Activated T-helper 1 cell treated with anti-CD3 and anti-CD28 coated beads, Interleukin-12 subunit alpha, Interleukin-12 subunit beta, Interleukin-2, Interleukin-4 antibody, amounts not matched to agents 30 ng/mL and 10 ng/mL and 1 ng/mL, durations not matched to agents 14 hours and 24 hours and 36 hours (primary cell): ENCODE measurements at regions of chr15 and their contacts with region 1.

Region 1: GRCh38 chr15:99928429-99928981 is 195.3 kb upstream of the LYSMD4 start:
- DNase-seq: peak; percentile 87
- H3K4me3 Mint-ChIP-seq: peak overlapping the region; percentile 82
- H3K27ac Mint-ChIP-seq: peak overlapping the region; percentile 87
- H3K4me1 Mint-ChIP-seq: peaks cover 14% of the 10 kb centered on the region
- H3K27me3 Mint-ChIP-seq: peaks cover 23% of the 10 kb centered on the region

Region 2: DNA sequence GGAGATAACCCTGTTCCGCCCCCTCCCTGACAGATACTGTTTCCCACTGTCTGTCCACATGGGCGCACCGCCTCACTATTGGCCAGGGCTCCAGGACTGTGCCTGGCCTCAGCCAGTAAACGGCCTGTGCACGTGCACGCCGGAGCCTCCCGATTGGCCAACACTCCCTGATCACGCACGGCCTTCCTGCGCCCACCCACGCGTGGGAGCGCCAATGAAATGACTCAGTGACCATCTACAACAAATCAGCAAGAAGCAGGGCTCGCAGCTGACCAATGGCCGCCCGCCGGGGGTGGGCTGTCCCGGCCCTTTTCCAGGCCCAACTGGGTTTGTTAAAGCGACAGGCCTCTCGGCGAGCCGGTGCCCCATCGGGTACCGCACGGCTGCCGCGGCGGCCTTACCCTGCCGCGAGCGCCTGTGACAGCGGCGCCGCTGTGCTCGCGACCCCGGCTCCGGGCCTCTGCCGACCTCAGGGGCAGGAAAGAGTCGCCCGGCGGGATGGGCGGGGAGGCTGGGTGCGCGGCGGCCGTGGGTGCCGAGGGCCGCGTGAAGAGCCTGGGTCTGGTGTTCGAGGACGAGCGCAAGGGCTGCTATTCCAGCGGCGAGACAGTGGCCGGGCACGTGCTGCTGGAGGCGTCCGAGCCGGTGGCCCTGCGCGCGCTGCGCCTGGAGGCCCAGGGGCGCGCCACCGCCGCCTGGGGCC is 1968.0 kb before region 1 on chr15 and contains the start of gene ARRDC4:
- intact Hi-C with region 1: loop called (anchors 2 kb)
- DNase-seq: peak; percentile 97
- H3K4me3 Mint-ChIP-seq: peak within 1 kb of the TSS; percentile 82
- H3K27ac Mint-ChIP-seq: peak within 1 kb of the TSS; percentile 75
- H3K4me1 Mint-ChIP-seq: peaks cover 35% of the 10 kb centered on the region
- H3K27me3 Mint-ChIP-seq: peaks cover 16% of the 10 kb centered on the region
- total RNA-seq, gene ARRDC4: 1.3 and 1.5 TPM in 2 replicates

Region 3: GRCh38 chr15:99733268-99734039 is 195.1 kb before region 1 on chr15 and contains the start of gene LYSMD4:
- intact Hi-C with region 1: loop called (anchors 2 kb)
- DNase-seq: peak; percentile 97
- H3K4me3 Mint-ChIP-seq: peak within 1 kb of the TSS; percentile 86
- H3K27ac Mint-ChIP-seq: peak within 1 kb of the TSS; percentile 88
- H3K4me1 Mint-ChIP-seq: peaks cover 34% of the 10 kb centered on the region
- H3K27me3 Mint-ChIP-seq: no peaks in the 10 kb centered on the region
- total RNA-seq, gene LYSMD4: 10.1 and 10.3 TPM in 2 replicates

Region 4: DNA sequence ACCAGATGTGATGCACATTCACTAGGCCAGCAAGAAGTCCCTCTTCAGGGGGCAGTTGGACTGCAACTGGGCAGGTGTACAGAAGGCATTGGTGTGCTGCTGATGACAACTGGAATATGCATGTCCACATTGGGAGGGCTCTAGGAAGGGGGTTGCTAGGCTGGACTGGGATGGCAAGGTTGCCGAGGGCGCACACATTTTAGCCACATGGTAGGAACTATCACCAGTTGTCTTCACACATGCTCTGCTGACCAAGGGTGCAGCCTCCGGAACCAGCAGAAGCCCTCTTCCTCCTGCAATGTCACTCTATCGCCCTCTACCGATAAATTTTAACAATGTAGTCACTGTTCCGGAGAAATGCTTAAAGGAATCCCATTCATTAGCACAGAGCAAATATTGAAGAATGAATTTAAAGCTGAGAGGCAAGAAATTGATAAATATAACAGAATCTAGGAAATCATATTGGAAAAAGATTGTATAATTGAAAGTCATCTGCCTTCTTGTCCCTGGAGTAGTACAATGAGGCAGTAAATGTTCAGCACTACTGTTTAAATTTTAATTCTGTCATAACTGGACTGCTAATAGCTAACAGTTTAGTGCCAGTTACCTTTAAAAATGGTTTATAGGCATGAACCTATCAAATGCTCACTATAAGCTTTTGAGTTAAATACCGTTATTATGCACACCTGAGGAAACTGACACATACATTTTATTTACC is 172.7 kb before region 1 on chr15:
- intact Hi-C with region 1: no loop called
- DNase-seq: peak; percentile 31
- H3K4me3 Mint-ChIP-seq: no peak overlapping the region
- H3K27ac Mint-ChIP-seq: no peak overlapping the region
- H3K4me1 Mint-ChIP-seq: peaks cover 8% of the 10 kb centered on the region
- H3K27me3 Mint-ChIP-seq: peaks cover 14% of the 10 kb centered on the region

Region 5: DNA sequence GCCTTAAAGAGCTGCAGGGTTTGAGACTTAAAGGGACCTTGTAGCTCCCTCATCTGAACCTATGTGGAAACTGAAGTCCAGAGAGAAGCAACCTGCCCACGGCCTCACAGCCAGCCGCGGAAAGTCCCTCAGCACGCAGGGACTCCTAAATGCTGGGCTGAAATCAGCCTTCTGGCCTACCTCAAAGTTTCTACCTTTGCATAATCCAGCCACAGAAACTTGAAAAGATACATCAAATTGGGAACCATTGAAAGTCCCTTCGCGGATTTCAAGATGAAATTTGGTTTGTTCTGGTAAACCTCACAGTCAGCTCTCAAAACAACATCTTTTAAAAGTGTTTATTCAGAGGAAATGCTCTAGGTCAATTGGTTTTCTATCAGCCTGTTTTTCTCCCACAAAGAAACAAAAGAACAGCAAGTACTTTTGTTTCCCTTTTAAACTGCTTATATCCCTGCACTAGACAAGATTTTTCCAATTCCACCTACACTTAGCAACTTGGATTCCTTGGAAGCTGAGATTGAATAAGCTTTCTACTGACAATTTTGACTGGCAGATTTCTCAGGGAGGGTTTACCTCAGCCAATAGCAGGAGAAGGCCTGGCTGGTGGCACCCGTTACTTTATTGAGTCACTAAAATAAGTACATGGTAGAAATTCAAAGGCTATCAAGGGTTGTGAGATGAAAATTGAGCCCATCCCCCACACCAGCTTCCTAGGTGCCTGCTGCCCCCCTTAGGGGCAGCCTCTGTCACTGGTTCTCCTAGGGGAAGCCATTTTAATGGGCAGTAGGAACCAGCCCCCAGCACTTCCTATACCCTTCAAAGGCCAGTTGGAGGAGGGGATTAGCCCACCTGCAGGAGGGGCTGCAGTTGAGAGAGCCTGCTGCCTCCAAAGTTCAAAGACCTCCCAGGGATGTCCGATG is 242.0 kb after region 1 on chr15:
- intact Hi-C with region 1: loop called (anchors 2 kb)
- DNase-seq: peak; percentile 43
- H3K4me3 Mint-ChIP-seq: no peak overlapping the region
- H3K27ac Mint-ChIP-seq: peak overlapping the region; percentile 83
- H3K4me1 Mint-ChIP-seq: peaks cover 15% of the 10 kb centered on the region
- H3K27me3 Mint-ChIP-seq: peaks cover 1% of the 10 kb centered on the region

Region 6: GRCh38 chr15:100572362-100572983 is 644.0 kb after region 1 on chr15:
- intact Hi-C with region 1: loop called (anchors 2 kb)
- DNase-seq: no peak
- H3K4me3 Mint-ChIP-seq: peak overlapping the region; percentile 74
- H3K27ac Mint-ChIP-seq: peak overlapping the region; percentile 81
- H3K4me1 Mint-ChIP-seq: peaks cover 69% of the 10 kb centered on the region
- H3K27me3 Mint-ChIP-seq: no peaks in the 10 kb centered on the region

Region 7: GRCh38 chr15:101008158-101009139 is 1079.9 kb after region 1 on chr15:
- intact Hi-C with region 1: loop called (anchors 2 kb)
- DNase-seq: peak; percentile 80
- H3K4me3 Mint-ChIP-seq: peak overlapping the region; percentile 89
- H3K27ac Mint-ChIP-seq: peak overlapping the region; percentile 18
- H3K4me1 Mint-ChIP-seq: peaks cover 19% of the 10 kb centered on the region
- H3K27me3 Mint-ChIP-seq: peaks cover 21% of the 10 kb centered on the region